ENCODE measurements at regions of chr1 and their contacts with region 1.

Region 1: DNA sequence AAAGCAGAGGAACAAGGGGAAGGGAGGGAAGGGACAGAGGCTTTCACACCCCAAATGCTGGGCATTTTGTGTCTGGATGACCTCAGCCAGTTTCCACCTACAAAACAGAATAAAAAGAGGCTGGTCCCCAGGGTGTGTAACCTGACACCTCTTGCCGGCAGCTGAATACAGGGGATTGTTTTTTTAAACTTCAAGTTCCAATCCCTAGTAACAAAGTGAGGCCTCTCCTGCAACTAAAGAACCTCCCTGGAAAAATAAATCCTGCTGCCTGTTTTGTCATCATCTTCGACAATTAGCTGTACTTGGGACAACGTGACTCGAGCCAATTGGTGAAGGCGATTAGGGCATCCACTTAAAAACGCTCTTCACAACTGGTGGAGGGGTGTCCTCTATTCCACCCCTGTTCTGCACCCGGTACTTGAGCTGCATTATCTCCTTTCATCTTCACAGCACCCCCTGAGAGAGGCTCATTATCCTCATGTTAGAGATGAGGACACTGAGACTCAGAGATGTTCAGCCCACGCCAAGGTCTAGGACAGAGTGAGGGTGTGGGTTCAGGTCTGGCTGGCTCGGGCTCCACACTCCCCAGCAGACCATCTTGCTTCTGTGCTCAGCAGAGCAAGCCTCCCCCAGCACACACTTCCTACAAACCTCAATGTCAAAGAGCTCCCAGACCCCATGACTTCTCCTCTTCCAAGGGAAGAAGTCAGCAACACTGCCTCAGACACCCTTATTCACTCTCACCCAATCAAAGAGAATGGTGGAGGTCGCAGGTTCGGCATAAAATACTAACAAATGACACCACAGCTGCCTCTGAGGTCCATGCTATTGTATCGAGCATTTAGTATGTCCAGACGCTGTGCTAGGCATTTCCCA is 15.2 kb downstream of the ITPKB start:
- DNase-seq: peak; percentile 74
- H3K4me3 ChIP-seq: no peak overlapping the region
- H3K27ac ChIP-seq: no peak overlapping the region
- H3K4me1 ChIP-seq: peaks cover 10% of the 10 kb centered on the region
- H3K27me3 ChIP-seq: no peaks in the 10 kb centered on the region
- CTCF ChIP-seq: no peak
- POLR2A ChIP-seq: no peak

Region 2: GRCh38 chr1:226691247-226691646 is 32.6 kb before region 1 on chr1:
- CTCF ChIA-PET with region 1: no interaction called
- POLR2A ChIA-PET with region 1: no interaction called
- dilution Hi-C with region 1: no loop called
- intact Hi-C with region 1: loop called (anchors 1 kb)
- DNase-seq: peak; percentile 26
- H3K4me3 ChIP-seq: no peak overlapping the region
- H3K27ac ChIP-seq: peak overlapping the region; percentile 42
- H3K4me1 ChIP-seq: peaks cover 14% of the 10 kb centered on the region
- H3K27me3 ChIP-seq: no peaks in the 10 kb centered on the region
- CTCF ChIP-seq: no peak
- POLR2A ChIP-seq: no peak

Region 3: DNA sequence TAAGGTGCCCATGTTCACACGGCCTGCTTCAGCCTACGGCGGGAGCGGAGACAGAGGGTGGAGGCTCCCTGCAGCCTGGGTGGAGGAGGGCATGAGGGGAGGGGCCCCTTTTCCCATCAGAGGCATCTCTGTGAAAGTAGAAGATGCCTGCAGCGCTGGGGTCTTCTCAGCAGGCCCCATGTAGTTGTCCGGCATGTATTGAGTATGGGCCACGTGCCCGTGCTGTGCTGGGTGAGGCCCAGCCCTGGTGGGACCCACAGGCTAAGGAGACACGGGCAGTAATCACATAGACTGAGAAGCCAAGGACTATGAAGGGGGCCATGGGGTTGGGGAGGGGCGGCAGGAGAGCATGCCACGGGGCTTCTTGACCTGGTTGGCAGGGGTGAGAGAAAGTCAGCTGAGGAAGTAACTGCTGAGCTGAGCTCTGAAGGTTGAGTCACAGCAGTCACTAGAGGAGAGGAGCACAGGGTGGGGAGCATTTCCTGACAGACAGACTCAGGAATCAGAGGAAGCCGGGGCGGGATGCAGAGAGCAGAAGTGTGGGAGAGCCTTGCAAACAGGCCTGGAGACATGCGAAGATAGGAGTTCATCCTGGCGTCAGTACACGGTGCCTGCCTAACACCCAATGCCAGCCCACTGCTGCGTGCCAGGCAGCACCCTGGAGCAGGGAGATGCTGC is 168.1 kb after region 1 on chr1:
- CTCF ChIA-PET with region 1: no interaction called
- POLR2A ChIA-PET with region 1: interaction called, 14 read pairs
- dilution Hi-C with region 1: no loop called
- intact Hi-C with region 1: no loop called
- DNase-seq: peak; percentile 65
- H3K4me3 ChIP-seq: no peak overlapping the region
- H3K27ac ChIP-seq: no peak overlapping the region
- H3K4me1 ChIP-seq: peaks cover 8% of the 10 kb centered on the region
- H3K27me3 ChIP-seq: no peaks in the 10 kb centered on the region
- CTCF ChIP-seq: no peak
- POLR2A ChIP-seq: no peak

Measured in endothelial cell of umbilical vein (primary cell).